ENCODE measurements at regions of chr1 and their contacts with region 1.

Region 1: DNA sequence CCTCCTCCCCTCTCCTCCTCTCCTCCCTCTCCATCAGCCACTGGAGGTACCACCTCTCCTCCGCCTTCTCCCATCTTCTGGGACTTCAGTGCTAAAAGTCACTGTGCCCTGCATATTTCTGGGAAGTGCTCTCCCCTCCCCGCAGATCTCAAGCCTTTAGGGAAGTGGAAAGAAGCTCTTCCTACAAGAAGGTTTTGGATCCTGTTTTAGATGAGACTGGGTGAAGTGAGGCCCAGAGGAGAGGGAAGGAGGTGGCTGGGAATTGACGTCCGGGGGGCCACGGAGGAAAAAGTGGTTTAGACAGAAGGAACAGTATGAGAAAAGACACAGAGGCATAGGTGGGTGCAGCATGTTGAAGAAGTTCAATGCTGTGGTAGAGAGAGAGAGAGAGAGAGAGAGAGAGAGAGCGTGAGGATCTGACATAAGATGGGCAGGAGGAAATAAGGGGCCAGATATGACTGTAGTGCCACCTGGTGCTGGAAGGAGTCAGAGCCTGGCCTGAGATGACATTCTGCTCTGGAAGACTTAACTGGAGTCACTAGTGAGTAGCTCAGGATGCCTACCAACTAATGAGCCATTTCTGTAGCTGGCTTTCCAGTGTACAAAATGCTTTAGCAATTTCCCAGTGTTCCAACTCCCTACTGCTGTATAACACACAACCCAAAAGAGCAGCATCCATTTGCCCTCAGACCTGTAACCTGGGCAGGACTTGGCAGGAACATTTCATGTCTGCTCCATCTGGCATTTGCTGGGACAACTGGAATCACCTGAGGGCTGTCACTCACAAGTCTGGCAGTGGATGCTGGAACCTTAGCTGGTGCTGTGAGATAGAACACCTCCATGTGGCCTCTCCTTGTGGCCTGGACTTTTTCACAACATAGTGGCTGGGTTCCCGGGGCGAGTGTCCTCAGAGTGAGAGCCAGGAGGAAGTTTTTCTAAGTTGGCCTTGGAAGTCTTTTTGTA is 16.6 kb upstream of the ZSCAN20 start:
- DNase-seq: peak; percentile 90
- ATAC-seq: peak; percentile 86
- H3K4me3 ChIP-seq: no peak overlapping the region
- H3K27ac ChIP-seq: no peak overlapping the region
- H3K4me1 ChIP-seq: peaks cover 16% of the 10 kb centered on the region
- H3K27me3 ChIP-seq: no peaks in the 10 kb centered on the region
- CTCF ChIP-seq: peak; percentile 93
- POLR2A ChIP-seq: 0 out of 2 replicates have a peak, but pooled peaks have one; percentile 24
- RAD21 ChIP-seq: peak; percentile 93

Region 2: DNA sequence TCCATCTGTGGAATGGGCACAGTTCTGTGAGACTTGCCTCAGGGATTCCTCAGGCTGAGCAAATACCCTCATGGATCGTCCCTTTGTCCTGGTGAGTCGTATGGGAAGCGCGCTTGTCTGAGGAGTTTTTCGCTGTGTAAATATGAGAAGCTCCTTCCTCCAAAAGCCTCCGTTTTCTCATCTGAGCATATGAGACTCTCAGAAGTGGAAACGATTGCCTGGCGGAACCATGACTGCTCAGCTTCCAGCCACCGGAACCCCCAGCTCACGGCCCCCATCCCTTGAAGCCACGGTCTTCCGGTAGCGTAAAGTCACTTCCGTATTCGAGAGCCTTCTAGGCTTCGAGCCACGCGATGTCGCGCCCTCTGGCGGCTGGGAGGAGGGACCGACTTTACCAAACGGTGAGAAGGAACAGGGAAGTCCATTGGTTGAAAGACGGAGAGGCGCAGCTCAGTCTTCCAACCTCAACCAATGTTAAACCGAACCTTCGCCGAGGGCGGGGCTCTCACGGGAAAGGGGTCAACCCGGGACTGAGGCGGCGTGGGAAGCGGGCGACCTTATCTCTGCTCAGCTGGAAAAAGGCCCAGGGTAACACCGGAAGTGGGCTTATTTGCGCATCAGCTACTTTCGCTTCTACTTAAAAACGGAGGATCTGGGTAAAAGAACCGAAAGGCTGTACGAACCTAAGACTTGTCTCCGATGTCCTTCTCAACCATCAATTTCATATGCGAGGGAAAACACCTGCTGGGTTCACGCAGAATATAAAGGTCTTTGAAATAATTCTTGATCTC is 328.6 kb before region 1 on chr1:
- CTCF ChIA-PET with region 1: no interaction called
- POLR2A ChIA-PET with region 1: no interaction called
- dilution Hi-C with region 1: no loop called
- in situ Hi-C with region 1: loop called (anchors 10 kb)
- intact Hi-C with region 1: loop called (anchors 5 kb)
- DNase-seq: peak; percentile 100
- ATAC-seq: peak; percentile 98
- H3K4me3 ChIP-seq: peak overlapping the region; percentile 74
- H3K27ac ChIP-seq: peak overlapping the region; percentile 95
- H3K4me1 ChIP-seq: peaks cover 3% of the 10 kb centered on the region; the same call in 1 of the 2 replicates
- H3K27me3 ChIP-seq: no peaks in the 10 kb centered on the region
- CTCF ChIP-seq: peak; percentile 99
- POLR2A ChIP-seq: peak; percentile 96
- RAD21 ChIP-seq: peak; percentile 50

Region 3: GRCh38 chr1:33219881-33220661 is 235.7 kb before region 1 on chr1:
- CTCF ChIA-PET with region 1: no interaction called
- POLR2A ChIA-PET with region 1: no interaction called
- dilution Hi-C with region 1: no loop called
- in situ Hi-C with region 1: no loop called
- intact Hi-C with region 1: loop called (anchors 5 kb)
- DNase-seq: peak; percentile 45
- ATAC-seq: peak; percentile 56; the same call in 1 of the 2 replicates
- H3K4me3 ChIP-seq: no peak overlapping the region
- H3K27ac ChIP-seq: no peak overlapping the region
- H3K4me1 ChIP-seq: peaks cover 10% of the 10 kb centered on the region
- H3K27me3 ChIP-seq: peaks cover 4% of the 10 kb centered on the region; the same call in 1 of the 2 replicates
- CTCF ChIP-seq: no peak
- POLR2A ChIP-seq: no peak
- RAD21 ChIP-seq: no peak

Region 4: GRCh38 chr1:33443080-33443704 is 12.6 kb before region 1 on chr1:
- CTCF ChIA-PET with region 1: interaction called, 12 read pairs
- POLR2A ChIA-PET with region 1: no interaction called
- dilution Hi-C with region 1: no loop called
- in situ Hi-C with region 1: no loop called
- intact Hi-C with region 1: no loop called
- DNase-seq: peak; percentile 60
- ATAC-seq: peak; percentile 75
- H3K4me3 ChIP-seq: no peak overlapping the region
- H3K27ac ChIP-seq: peak overlapping the region; percentile 54; the same call in 1 of the 2 replicates
- H3K4me1 ChIP-seq: peaks cover 8% of the 10 kb centered on the region
- H3K27me3 ChIP-seq: no peaks in the 10 kb centered on the region
- CTCF ChIP-seq: no peak
- POLR2A ChIP-seq: no peak
- RAD21 ChIP-seq: no peak

Measured in IMR-90 (cell line).